PC-3 (cell line): ENCODE measurements at regions of chr3 and their contacts with region 1.

Region 1: GRCh38 chr3:118884748-118885206 is 149.9 kb downstream of the IGSF11 start:
- DNase-seq: peak; percentile 77
- ATAC-seq: peak; percentile 91
- H3K4me3 ChIP-seq: no peak overlapping the region
- H3K27ac ChIP-seq: no peak overlapping the region
- H3K4me1 ChIP-seq: no peaks in the 10 kb centered on the region
- H3K27me3 ChIP-seq: peaks cover 50% of the 10 kb centered on the region
- CTCF ChIP-seq: peak; percentile 99

Region 2: DNA sequence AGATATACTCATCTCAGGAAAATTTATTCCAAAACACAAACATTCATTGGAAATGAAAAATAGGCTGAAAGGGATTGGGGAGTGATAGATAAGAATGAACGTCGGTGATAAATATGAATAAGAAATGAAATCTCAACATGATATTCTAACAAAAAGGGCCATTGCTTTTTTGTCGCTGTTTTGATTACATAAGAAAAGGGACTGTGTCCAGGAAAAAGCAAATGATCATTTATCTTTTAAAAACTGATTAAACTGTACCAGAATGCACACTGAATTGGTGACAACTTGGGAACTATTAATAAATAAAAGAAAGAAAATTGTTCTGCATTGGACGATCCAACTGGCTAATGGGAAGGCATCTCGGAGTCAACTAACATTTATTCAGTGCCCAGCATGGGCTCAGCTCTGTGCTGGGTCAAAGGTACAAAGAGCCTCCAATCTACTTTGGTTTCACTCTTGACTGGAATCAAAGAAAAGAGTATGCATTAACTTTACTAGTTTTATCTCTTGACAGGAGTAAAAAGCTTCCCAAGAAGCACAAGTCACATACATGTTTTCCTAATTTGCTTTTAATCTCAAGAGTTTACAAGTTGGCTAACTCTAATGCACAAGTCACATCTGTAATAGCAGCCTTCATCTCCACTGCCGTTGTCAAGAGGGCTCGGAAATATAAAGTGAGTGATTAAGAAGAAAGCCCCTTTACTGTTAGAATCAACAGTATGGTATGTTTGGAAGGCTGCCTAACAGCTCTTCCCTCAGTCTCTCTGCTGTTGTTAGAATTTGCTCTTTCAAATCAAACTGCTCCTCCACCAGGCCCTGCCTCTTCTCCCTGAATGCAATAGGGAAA is 130.1 kb before region 1 on chr3:
- CTCF ChIA-PET with region 1: no interaction called
- POLR2A ChIA-PET with region 1: no interaction called
- intact Hi-C with region 1: no loop called
- DNase-seq: no peak
- ATAC-seq: no peak
- H3K4me3 ChIP-seq: no peak overlapping the region
- H3K27ac ChIP-seq: no peak overlapping the region
- H3K4me1 ChIP-seq: no peaks in the 10 kb centered on the region
- H3K27me3 ChIP-seq: no peaks in the 10 kb centered on the region
- CTCF ChIP-seq: no peak

Region 3: GRCh38 chr3:119034256-119035013 is 149.7 kb after region 1 on chr3 and contains the start of gene IGSF11:
- CTCF ChIA-PET with region 1: interaction called, 41 read pairs
- POLR2A ChIA-PET with region 1: no interaction called
- intact Hi-C with region 1: loop called (anchors 1 kb)
- DNase-seq: peak; percentile 68
- ATAC-seq: peak; percentile 89
- H3K4me3 ChIP-seq: peak within 1 kb of the TSS; percentile 79
- H3K27ac ChIP-seq: no peak within 1 kb of the TSS
- H3K4me1 ChIP-seq: peaks cover 6% of the 10 kb centered on the region; the same call in 1 of the 2 replicates
- H3K27me3 ChIP-seq: peaks cover 62% of the 10 kb centered on the region
- CTCF ChIP-seq: peak; percentile 77
- total RNA-seq, gene IGSF11: 0.66 TPM in 1 of 2 replicates, not detected in the other

Region 4: DNA sequence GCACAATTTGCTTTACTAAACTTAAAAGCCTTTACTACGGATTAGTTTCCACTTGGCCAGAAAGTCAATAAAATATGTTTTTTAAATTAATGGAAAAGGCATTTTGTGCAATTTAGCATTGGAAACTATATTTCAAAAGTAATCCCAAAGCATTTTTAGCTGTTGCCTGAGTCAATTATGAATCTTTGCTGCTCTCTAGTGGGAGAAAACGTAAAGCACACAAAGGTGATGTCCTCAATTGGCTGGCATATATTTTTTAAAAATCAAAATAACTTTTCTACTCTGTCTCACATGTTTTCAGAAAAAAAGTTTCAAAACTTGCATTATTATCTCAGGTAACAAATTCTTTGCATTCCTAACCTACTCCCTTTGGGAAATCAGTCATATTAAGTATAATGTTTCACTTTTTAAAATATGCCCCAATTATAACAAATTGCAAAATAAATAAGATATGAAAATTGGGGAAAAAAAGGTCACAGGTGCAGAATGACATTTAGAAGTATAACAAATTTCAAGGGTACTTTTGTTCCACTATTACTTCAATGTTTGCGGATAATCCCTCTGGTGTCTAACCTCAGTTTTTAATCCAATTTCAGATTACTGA is 213.9 kb after region 1 on chr3:
- CTCF ChIA-PET with region 1: interaction called, 23 read pairs
- POLR2A ChIA-PET with region 1: interaction called, 4 read pairs
- intact Hi-C with region 1: loop called (anchors 1 kb)
- DNase-seq: peak; percentile 81
- ATAC-seq: peak; percentile 55
- H3K4me3 ChIP-seq: no peak overlapping the region
- H3K27ac ChIP-seq: no peak overlapping the region
- H3K4me1 ChIP-seq: no peaks in the 10 kb centered on the region
- H3K27me3 ChIP-seq: no peaks in the 10 kb centered on the region; the same call in 1 of the 2 replicates
- CTCF ChIP-seq: peak; percentile 94